Caco-2 (cell line): ENCODE measurements at regions of chr7 and their contacts with region 1.

Region 1: DNA sequence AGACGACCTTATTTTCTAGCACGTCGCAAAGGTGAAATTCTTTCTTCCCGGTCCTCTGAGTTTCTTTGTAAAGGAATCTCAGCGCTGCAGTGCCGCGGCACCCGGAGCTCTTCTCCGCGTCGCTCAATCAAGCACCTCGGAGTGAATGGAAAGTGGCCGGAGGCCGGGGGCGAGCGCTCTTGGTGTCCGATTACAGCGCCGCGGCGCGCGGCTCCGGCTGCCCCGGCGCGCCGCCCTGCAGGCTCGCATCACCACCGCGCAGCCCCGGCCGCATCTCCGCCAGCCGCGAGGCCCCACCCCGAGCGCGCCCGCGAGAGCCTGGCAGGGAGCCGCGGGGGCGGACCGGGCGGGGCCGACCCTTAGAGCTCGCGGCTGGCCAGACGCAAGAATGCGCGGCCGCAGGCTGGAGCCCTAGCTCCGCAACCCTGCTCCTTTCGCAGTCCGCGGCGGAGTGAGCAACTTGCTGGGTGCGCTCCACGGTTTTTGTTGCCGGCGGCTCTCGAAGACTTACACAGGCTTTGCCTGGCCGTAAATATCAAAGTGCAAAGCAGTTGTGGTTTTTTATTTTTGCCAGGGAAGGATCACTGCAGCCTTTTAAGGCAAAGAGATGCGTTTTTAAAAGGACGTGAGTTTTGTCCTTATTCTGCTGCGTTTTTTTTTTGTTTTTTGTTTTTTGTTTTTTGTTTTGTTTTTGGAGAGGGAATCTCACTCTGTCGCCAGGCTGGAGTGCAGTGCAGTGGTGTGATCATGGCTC is at the start of gene SEMA3C:
- DNase-seq: peak; percentile 92 to 96
- H3K4me3 ChIP-seq: peak within 1 kb of the TSS; percentile 80
- H3K4me3 Mint-ChIP-seq: peak within 1 kb of the TSS; percentile 83
- H3K27ac Mint-ChIP-seq: peak within 1 kb of the TSS; percentile 89
- H3K4me1 ChIP-seq: peaks cover 26% of the 10 kb centered on the region
- H3K4me1 Mint-ChIP-seq: peaks cover 14% of the 10 kb centered on the region
- H3K27me3 ChIP-seq: no peaks in the 10 kb centered on the region
- H3K27me3 Mint-ChIP-seq: no peaks in the 10 kb centered on the region
- CTCF ChIP-seq: no peak
- total RNA-seq, gene SEMA3C: 25.8 and 32.1 TPM in 2 replicates

Region 2: GRCh38 chr7:80699045-80699638 is 219.9 kb before region 1 on chr7:
- CTCF ChIA-PET with region 1: no interaction called
- POLR2A ChIA-PET with region 1: no interaction called
- intact Hi-C with region 1: loop called (anchors 1 kb)
- DNase-seq: peak in 1 of 2 experiments; percentile 65
- H3K4me3 ChIP-seq: no peak overlapping the region
- H3K4me3 Mint-ChIP-seq: no peak overlapping the region
- H3K27ac Mint-ChIP-seq: no peak overlapping the region
- H3K4me1 ChIP-seq: 0 out of 2 replicates have a peak, but pooled peaks cover 5% of the 10 kb centered on the region
- H3K4me1 Mint-ChIP-seq: peaks cover 9% of the 10 kb centered on the region
- H3K27me3 ChIP-seq: no peaks in the 10 kb centered on the region
- H3K27me3 Mint-ChIP-seq: no peaks in the 10 kb centered on the region
- CTCF ChIP-seq: peak; percentile 35 to 70

Region 3: GRCh38 chr7:80883188-80884025 is 35.7 kb before region 1 on chr7:
- CTCF ChIA-PET with region 1: no interaction called
- POLR2A ChIA-PET with region 1: no interaction called
- intact Hi-C with region 1: loop called (anchors 1 kb)
- DNase-seq: peak; percentile 71 to 73
- H3K4me3 ChIP-seq: no peak overlapping the region
- H3K4me3 Mint-ChIP-seq: peak overlapping the region; percentile 48
- H3K27ac Mint-ChIP-seq: peak overlapping the region; percentile 80
- H3K4me1 ChIP-seq: peaks cover 28% of the 10 kb centered on the region
- H3K4me1 Mint-ChIP-seq: peaks cover 28% of the 10 kb centered on the region
- H3K27me3 ChIP-seq: no peaks in the 10 kb centered on the region
- H3K27me3 Mint-ChIP-seq: no peaks in the 10 kb centered on the region
- CTCF ChIP-seq: no peak

Region 4: GRCh38 chr7:81064426-81064825 is 145.3 kb after region 1 on chr7:
- CTCF ChIA-PET with region 1: no interaction called
- POLR2A ChIA-PET with region 1: no interaction called
- intact Hi-C with region 1: loop called (anchors 5 kb)
- DNase-seq: no peak
- H3K4me3 ChIP-seq: no peak overlapping the region
- H3K4me3 Mint-ChIP-seq: no peak overlapping the region
- H3K27ac Mint-ChIP-seq: peak overlapping the region; percentile 77
- H3K4me1 ChIP-seq: peaks cover 5% of the 10 kb centered on the region
- H3K4me1 Mint-ChIP-seq: peaks cover 19% of the 10 kb centered on the region
- H3K27me3 ChIP-seq: no peaks in the 10 kb centered on the region
- H3K27me3 Mint-ChIP-seq: no peaks in the 10 kb centered on the region
- CTCF ChIP-seq: no peak

Region 5: DNA sequence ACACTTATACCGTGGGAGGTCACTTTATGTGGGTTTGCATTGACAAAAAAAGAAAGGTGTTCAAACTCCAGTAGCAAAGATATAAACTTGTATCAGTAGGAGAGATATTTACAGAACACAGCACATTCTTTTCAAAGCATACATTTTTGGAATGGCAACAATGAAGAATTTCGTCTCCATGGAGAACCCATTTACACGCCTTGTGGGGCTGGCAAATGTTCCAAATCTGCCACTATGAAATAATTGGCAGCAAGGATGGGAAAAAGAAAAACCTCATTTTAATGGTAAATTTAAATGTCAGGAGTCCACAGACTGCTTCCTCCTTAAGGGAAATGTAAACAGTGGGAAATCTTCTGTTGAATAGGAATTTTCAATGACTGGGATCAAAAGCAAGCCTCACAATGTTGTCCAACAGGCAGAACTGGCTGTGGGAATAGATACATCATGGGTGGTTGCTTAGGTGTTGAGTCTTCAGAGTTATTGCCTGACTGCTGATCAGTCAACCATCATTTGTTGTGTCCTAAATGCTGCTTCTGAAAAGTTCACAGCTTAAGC is 256.3 kb after region 1 on chr7:
- CTCF ChIA-PET with region 1: no interaction called
- POLR2A ChIA-PET with region 1: no interaction called
- intact Hi-C with region 1: loop called (anchors 5 kb)
- DNase-seq: peak; percentile 74 to 78
- H3K4me3 ChIP-seq: no peak overlapping the region
- H3K4me3 Mint-ChIP-seq: peak overlapping the region; percentile 47
- H3K27ac Mint-ChIP-seq: peak overlapping the region; percentile 93
- H3K4me1 ChIP-seq: peaks cover 32% of the 10 kb centered on the region
- H3K4me1 Mint-ChIP-seq: peaks cover 17% of the 10 kb centered on the region
- H3K27me3 ChIP-seq: no peaks in the 10 kb centered on the region
- H3K27me3 Mint-ChIP-seq: no peaks in the 10 kb centered on the region
- CTCF ChIP-seq: no peak

Region 6: GRCh38 chr7:81447351-81447952 is 528.4 kb after region 1 on chr7:
- CTCF ChIA-PET with region 1: interaction called, 3 read pairs
- POLR2A ChIA-PET with region 1: interaction called, 10 read pairs
- intact Hi-C with region 1: loop called (anchors 1 kb)
- DNase-seq: peak; percentile 47 to 51
- H3K4me3 ChIP-seq: no peak overlapping the region
- H3K4me3 Mint-ChIP-seq: no peak overlapping the region
- H3K27ac Mint-ChIP-seq: no peak overlapping the region
- H3K4me1 ChIP-seq: no peaks in the 10 kb centered on the region
- H3K4me1 Mint-ChIP-seq: peaks cover 11% of the 10 kb centered on the region
- H3K27me3 ChIP-seq: no peaks in the 10 kb centered on the region
- H3K27me3 Mint-ChIP-seq: no peaks in the 10 kb centered on the region
- CTCF ChIP-seq: peak; percentile 62 to 72